Dendritic cell treated with granulocyte-macrophage colony-stimulating factor and Interleukin-4, amounts not matched to agents 40 ng/mL and 50 ng/mL, for 4 days (primary cell): ENCODE measurements at regions of chr10 and their contacts with region 1.

Region 1: GRCh38 chr10:6678211-6678803 is 98.2 kb upstream of the PRKCQ start:
- H3K4me3 Mint-ChIP-seq: no peak overlapping the region
- H3K27ac Mint-ChIP-seq: no peak overlapping the region
- H3K4me1 Mint-ChIP-seq: peaks cover 8% of the 10 kb centered on the region
- H3K27me3 Mint-ChIP-seq: peaks cover 27% of the 10 kb centered on the region

Region 2: DNA sequence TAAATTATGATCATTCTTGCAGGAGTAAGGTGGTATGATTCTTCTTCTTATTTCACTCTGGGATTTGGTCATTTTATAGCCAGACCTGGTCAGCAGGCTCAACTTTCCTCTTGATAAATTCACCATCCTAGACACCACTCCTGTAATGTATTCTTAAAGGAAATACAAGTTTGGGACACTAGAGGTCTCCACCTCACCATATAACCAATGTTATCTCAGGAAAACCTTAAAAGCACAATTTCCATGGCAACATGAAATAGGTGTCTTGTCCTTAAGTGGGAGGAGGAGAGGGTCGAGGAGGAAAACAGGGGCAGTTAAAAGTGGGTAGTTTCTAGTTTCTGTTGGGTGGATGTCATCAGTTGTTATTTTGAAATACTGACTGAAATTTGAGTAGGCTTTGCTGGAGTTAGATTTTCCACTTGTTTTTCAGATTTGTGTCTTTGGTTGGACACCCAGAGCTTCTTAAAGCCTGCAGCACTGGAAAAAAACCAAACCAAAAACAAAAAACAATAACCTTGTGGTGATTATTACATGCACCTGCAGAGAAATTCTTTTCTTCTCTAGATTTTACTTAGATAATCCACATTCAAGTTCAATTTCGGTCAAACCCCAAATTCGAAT is 261.3 kb before region 1 on chr10:
- intact Hi-C with region 1: loop called (anchors 1 kb)
- H3K4me3 Mint-ChIP-seq: no peak overlapping the region
- H3K27ac Mint-ChIP-seq: no peak overlapping the region
- H3K4me1 Mint-ChIP-seq: no peaks in the 10 kb centered on the region
- H3K27me3 Mint-ChIP-seq: no peaks in the 10 kb centered on the region

Region 3: DNA sequence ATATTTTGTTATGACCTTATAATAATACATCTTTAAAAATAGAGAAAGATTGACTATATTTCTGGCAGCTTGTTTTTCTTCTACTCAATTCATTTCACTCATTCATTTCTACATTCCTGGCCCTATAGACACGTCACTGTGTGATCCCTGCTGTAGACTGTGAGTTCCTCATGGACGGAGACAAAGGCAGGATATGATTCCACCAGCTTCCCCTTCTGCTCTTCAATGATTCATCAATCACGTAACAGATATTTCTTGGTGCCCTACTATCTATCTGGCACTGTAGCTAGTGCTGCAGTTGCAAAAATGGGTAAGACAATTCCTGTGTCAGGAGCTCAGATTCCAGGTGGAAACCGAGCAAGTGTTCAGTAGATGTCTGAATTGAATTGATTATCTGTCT is 317.5 kb after region 1 on chr10:
- intact Hi-C with region 1: no loop called
- H3K4me3 Mint-ChIP-seq: no peak overlapping the region
- H3K27ac Mint-ChIP-seq: no peak overlapping the region
- H3K4me1 Mint-ChIP-seq: peaks cover 8% of the 10 kb centered on the region
- H3K27me3 Mint-ChIP-seq: no peaks in the 10 kb centered on the region